HCT116 (cell line): ENCODE measurements at regions of chr12 and their contacts with region 1.

Region 1: DNA sequence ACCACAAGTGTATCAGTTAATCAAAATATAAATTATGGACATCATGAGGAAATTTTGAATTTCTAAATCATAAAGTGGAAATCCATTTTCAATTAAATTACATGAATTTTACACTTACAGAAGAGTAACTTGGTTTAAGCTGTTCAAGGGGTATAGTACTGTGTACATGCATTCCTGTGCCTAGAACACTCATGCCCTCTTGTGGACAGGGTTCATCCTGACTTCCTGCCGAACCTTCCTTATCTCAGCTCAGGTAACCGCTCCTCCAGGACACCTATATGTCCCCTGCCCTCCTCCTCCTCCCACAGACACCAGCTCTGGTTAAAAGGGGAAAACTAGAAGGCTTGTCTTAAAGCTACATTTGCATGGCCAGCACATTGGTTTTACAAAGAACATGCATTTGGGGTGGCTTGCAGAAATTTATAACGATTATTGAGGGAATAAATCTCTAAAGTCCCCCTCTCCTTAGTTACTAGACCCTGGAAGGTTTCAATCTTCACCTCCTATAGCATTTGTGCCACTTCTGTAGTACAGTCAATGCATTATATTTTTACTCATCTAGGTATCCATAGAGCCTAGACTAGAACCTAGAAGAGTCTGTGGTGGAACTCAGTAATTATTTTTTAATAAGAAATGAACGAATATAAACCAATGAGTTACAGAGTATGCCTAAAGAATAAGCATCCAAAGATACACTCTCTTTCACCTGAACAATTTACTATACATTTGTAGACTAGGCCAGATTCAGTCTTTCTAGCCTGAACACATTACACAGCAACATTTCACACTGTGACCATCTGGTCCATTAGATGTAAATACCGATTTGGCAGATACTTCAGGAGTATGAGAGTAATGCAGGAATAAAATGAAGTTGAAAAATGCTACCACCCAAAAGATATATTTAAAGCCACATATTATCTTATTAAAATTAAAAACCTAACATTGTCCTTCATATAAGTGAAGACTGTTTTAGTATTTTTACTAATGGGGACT is 345.6 kb downstream of the PAWR start:
- DNase-seq: peak; percentile 58
- ATAC-seq: peak; percentile 100
- H3K4me3 ChIP-seq: no peak overlapping the region
- H3K27ac ChIP-seq: no peak overlapping the region
- H3K4me1 ChIP-seq: no peaks in the 10 kb centered on the region
- H3K27me3 ChIP-seq: no peaks in the 10 kb centered on the region
- CTCF ChIP-seq: peak; percentile 55 to 81 (median 78); a peak in 5 of 6 replicates
- POLR2A ChIP-seq: no peak
- RAD21 ChIP-seq: peak; percentile 83

Region 2: GRCh38 chr12:78181544-78182162 is 1163.5 kb before region 1 on chr12:
- CTCF ChIA-PET with region 1: interaction called, 3 read pairs
- POLR2A ChIA-PET with region 1: no interaction called
- RAD21 ChIA-PET with region 1: no interaction called
- intact Hi-C with region 1: loop called (anchors 1 kb)
- DNase-seq: no peak
- ATAC-seq: no peak
- H3K4me3 ChIP-seq: no peak overlapping the region
- H3K27ac ChIP-seq: no peak overlapping the region
- H3K4me1 ChIP-seq: no peaks in the 10 kb centered on the region
- H3K27me3 ChIP-seq: no peaks in the 10 kb centered on the region
- CTCF ChIP-seq: peak; percentile 13 to 53 (median 19); a peak in 4 of 6 replicates
- POLR2A ChIP-seq: no peak
- RAD21 ChIP-seq: peak; percentile 67

Region 3: DNA sequence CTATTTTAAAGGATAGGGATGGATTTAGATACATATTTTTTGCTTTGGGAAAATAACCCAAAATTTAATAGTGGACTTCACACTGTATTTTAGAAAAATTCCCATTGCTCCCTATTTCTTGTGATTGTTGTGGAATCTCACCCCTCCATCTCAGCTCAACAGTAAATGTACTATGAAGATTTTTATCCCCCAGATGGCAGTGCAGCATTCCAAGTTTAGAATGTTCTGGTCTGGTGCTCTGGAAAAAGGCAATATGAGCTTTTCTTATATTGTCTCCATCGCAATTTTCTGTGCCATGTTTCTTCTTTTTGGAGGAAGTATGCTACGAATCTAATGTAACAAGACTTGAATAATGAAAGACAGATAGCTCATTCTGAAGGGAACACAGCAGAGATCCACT is 952.2 kb before region 1 on chr12:
- CTCF ChIA-PET with region 1: interaction called, 3 read pairs
- POLR2A ChIA-PET with region 1: no interaction called
- RAD21 ChIA-PET with region 1: no interaction called
- intact Hi-C with region 1: loop called (anchors 10 kb)
- DNase-seq: no peak
- ATAC-seq: no peak
- H3K4me3 ChIP-seq: no peak overlapping the region
- H3K27ac ChIP-seq: no peak overlapping the region
- H3K4me1 ChIP-seq: no peaks in the 10 kb centered on the region
- H3K27me3 ChIP-seq: no peaks in the 10 kb centered on the region
- CTCF ChIP-seq: peak in 2 of 3 experiments; percentile 22 to 27; a peak in 3 of 6 replicates
- POLR2A ChIP-seq: no peak
- RAD21 ChIP-seq: peak; percentile 48

Region 4: DNA sequence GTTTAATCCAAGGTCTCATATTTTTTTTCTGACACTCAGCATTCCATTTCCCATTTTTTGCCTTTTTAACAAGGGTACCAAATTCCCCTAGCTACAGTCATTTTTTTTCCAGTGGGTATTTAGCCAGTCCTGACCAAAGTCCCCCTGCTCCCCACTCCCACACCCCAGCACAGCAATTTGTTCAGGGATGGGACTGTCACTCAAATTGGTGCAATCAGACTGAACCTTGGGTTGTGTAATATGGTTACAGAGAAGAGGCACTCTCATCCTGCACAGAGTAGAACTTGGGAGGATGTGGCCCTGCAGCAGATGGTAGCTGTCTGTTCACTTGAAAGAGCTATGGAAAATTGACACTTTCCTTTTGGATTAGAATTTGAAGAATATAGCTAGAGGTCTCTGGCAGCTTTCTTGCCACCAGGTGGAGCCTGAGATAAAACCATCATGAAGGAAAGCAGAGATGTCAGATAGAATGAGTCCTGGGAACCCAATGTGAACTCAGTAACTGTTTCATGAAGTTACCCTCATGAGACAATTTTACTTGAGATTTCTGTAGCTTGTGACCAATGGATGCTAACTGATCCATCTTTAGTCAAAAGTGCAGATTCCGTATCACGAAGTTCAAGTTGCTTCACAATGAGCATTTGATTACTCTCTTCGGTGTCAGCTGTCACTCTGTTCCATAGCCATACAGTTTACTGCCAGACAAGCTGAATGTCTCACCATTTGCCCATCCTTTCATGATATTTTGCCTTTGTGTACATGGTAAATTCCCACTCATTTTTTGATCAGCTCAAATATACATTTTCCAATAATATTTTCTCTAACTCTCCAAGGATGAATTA is 874.6 kb before region 1 on chr12:
- CTCF ChIA-PET with region 1: interaction called, 15 read pairs
- POLR2A ChIA-PET with region 1: no interaction called
- RAD21 ChIA-PET with region 1: interaction called in 1 of 2 experiments, 4 read pairs
- intact Hi-C with region 1: loop called (anchors 1 kb)
- DNase-seq: peak; percentile 37
- ATAC-seq: peak; percentile 83
- H3K4me3 ChIP-seq: no peak overlapping the region
- H3K27ac ChIP-seq: no peak overlapping the region
- H3K4me1 ChIP-seq: no peaks in the 10 kb centered on the region
- H3K27me3 ChIP-seq: no peaks in the 10 kb centered on the region
- CTCF ChIP-seq: peak; percentile 55 to 75 (median 68); a peak in 5 of 6 replicates
- POLR2A ChIP-seq: no peak
- RAD21 ChIP-seq: peak; percentile 70

Region 5: DNA sequence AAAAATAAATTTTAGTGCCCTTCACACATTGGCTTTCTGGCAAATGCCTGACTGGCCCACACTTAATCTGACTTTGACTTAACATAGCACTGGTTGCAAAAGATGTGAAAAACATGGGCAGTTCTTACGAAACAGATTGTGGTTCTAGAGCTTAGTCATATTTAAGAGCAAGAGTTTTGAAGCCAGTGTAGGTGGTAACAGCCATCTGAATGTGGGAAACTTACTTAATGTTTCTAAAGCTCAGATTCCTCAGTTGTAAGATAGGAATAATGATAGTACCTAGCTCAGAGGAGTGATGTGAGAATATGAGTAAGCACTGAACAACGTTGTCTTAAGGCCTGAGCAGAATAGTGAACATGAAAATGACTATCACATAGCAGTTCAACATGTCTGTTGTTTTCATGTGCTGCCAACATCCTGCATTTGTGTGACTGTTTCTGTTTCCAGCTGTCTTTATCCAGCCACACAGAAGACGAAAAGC is 217.8 kb before region 1 on chr12:
- CTCF ChIA-PET with region 1: interaction called, 5 read pairs
- POLR2A ChIA-PET with region 1: no interaction called
- RAD21 ChIA-PET with region 1: no interaction called
- intact Hi-C with region 1: loop called (anchors 10 kb)
- DNase-seq: no peak
- ATAC-seq: no peak
- H3K4me3 ChIP-seq: no peak overlapping the region
- H3K27ac ChIP-seq: no peak overlapping the region
- H3K4me1 ChIP-seq: no peaks in the 10 kb centered on the region
- H3K27me3 ChIP-seq: no peaks in the 10 kb centered on the region
- CTCF ChIP-seq: no peak
- POLR2A ChIP-seq: no peak
- RAD21 ChIP-seq: no peak